GM12878 (cell line): ENCODE measurements at regions of chr2 and their contacts with region 1.

Region 1: DNA sequence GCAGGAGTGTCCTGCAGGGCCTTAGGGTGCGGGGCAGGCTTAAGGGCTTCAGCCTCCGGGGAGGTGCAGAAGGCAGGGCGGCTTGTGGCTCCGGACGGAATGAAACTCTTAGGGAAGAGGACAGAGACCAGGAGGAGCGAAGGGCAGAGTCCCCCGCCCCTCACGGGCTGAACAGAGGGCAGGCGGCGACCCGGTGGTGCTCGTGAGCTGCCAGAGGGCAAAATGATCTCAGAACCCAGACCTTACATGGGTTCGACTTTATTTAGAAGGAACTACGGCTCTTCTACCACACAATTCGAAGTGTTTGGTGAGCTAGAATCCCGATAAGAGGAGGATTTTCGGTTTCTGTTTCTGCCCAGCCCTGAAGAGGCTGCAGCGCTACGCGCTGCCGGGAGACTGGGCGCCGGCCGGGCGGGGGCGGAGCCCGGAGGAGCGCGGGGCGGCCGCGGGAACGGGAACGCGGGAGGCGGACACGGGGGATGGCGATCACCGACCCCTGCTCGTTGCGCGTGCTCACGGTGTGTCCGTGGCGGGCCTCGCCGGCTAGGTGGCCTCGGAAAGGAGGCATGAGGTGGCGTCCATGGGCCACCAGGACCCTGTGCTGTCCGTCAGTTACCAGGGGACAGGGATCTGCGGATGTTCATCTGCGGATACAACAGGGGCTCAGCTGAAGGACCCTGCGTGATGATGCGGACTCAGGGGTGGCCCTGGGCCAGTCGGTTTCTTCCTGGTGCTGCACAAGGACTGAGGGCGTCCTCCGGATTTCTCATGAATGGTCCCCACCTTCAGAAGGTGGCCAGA is 4.2 kb upstream of the SP100 start:
- DNase-seq: no peak
- ATAC-seq: peak; percentile 77
- H3K4me3 ChIP-seq: peak overlapping the region; percentile 77
- H3K27ac ChIP-seq: peak overlapping the region; percentile 79
- H3K4me1 ChIP-seq: peaks cover 35% of the 10 kb centered on the region
- H3K27me3 ChIP-seq: no peaks in the 10 kb centered on the region
- CTCF ChIP-seq: no peak
- EP300 ChIP-seq: no peak
- POLR2A ChIP-seq: peak; percentile 84
- RAD21 ChIP-seq: no peak

Region 2: GRCh38 chr2:230209422-230210051 is 202.2 kb before region 1 on chr2:
- CTCF ChIA-PET with region 1: no interaction called
- POLR2A ChIA-PET with region 1: interaction called, 4 read pairs
- RAD21 ChIA-PET with region 1: interaction called, 4 read pairs
- SMC1A ChIA-PET with region 1: interaction called, 11 read pairs
- in situ Hi-C with region 1: no loop called
- intact Hi-C with region 1: no loop called
- DNase-seq: no peak
- ATAC-seq: peak; percentile 76
- H3K4me3 ChIP-seq: no peak overlapping the region
- H3K27ac ChIP-seq: no peak overlapping the region
- H3K4me1 ChIP-seq: peaks cover 40% of the 10 kb centered on the region
- H3K27me3 ChIP-seq: no peaks in the 10 kb centered on the region
- CTCF ChIP-seq: no peak
- EP300 ChIP-seq: peak in 1 of 2 experiments; percentile 84; a peak in 2 of 4 replicates
- POLR2A ChIP-seq: no peak
- RAD21 ChIP-seq: no peak

Region 3: DNA sequence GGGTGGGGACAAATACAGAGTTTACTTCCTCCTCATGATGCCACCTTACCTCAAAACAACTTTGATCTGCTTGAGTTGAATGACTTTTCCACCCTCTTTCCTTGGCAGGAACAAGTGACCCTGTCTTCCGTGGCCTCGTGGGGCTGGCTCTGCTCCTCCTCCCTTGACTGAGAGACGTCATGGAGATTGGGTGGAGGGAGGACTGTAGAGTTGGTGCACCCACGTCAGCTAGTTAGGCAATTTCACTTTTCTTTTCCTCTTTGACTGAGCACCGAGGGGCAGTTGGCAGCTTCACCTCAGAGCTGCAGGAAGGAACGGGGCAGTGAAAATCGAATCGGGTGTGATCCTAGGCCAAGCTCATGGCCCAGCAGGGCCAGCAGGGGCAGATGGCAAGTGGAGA is 186.3 kb before region 1 on chr2 and contains the start of gene SP140:
- CTCF ChIA-PET with region 1: interaction called, 5 read pairs
- POLR2A ChIA-PET with region 1: interaction called, 6 read pairs
- RAD21 ChIA-PET with region 1: interaction called, 12 read pairs
- SMC1A ChIA-PET with region 1: interaction called, 5 read pairs
- in situ Hi-C with region 1: no loop called
- intact Hi-C with region 1: loop called (anchors 2 kb)
- DNase-seq: peak; percentile 80
- ATAC-seq: peak; percentile 77
- H3K4me3 ChIP-seq: peak within 1 kb of the TSS; percentile 72
- H3K27ac ChIP-seq: peak within 1 kb of the TSS; percentile 68
- H3K4me1 ChIP-seq: peaks cover 48% of the 10 kb centered on the region
- H3K27me3 ChIP-seq: no peaks in the 10 kb centered on the region
- CTCF ChIP-seq: 0 out of 6 replicates have a peak, but pooled peaks of 1 of the 3 experiments have one; percentile 4
- EP300 ChIP-seq: no peak
- POLR2A ChIP-seq: peak; percentile 93
- RAD21 ChIP-seq: no peak
- polyA plus RNA-seq, gene SP140: 61.7 to 93.9 TPM

Region 4: DNA sequence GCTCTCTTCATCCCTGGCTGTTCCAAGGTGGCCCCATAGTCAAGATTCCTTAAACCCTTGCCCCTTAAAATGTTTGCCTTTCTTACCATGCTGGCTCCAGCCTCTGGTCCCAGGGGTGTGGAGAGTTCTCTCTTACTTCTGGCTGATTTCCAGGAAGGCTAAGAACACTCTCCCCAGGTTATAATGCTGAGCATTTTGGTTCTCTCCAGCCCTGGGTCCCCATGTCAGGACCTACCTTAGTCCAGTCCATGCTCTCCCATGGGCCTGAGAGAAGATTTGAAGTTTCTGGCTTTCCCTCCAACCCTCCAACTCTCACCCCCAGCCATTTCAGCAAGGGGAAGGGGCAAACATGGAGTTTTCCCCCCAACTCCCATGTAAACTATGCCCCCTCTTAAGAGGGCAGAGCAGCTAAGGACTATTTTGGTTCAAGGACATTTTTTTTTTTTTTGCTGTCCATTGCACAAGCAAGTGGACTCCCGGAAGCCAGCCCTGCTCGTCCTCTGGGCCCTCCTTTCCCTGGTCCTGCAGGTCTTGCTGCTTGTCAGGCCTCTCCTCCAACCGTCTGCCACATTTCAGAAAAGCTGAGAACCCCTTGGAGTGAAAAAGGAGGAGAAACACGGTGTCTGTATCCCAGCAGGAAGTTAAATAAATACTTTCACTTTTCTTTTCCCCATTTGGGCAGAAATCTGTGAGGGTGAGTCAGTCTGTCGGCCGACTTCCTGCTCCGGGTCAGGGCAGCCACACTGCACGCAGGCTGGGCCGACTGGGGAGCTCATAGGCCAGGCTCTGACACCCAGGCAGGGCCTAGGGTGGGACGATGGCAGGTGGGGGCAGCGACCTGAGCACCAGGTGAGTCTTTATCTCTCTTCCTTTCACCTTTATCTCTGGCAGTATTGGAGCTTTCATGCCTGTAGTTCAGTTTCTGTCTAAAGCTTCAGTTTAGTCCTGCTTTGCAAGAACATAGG is 85.0 kb before region 1 on chr2 and contains the start of gene SP140L:
- CTCF ChIA-PET with region 1: interaction called, 4 read pairs
- POLR2A ChIA-PET with region 1: interaction called, 7 read pairs
- RAD21 ChIA-PET with region 1: interaction called, 14 read pairs
- SMC1A ChIA-PET with region 1: no interaction called
- in situ Hi-C with region 1: no loop called
- intact Hi-C with region 1: loop called (anchors 5 kb)
- DNase-seq: peak; percentile 55
- ATAC-seq: peak; percentile 96
- H3K4me3 ChIP-seq: peak within 1 kb of the TSS; percentile 78
- H3K27ac ChIP-seq: peak within 1 kb of the TSS; percentile 96
- H3K4me1 ChIP-seq: no peaks in the 10 kb centered on the region
- H3K27me3 ChIP-seq: no peaks in the 10 kb centered on the region
- CTCF ChIP-seq: no peak
- EP300 ChIP-seq: no peak
- POLR2A ChIP-seq: peak; percentile 81
- RAD21 ChIP-seq: no peak
- polyA plus RNA-seq, gene SP140L: 4.7 to 6.1 TPM

Region 5: GRCh38 chr2:230430957-230431910 is 19.5 kb after region 1 on chr2:
- CTCF ChIA-PET with region 1: no interaction called
- POLR2A ChIA-PET with region 1: no interaction called
- RAD21 ChIA-PET with region 1: interaction called, 10 read pairs
- SMC1A ChIA-PET with region 1: interaction called, 19 read pairs
- in situ Hi-C with region 1: no loop called
- intact Hi-C with region 1: no loop called
- DNase-seq: no peak
- ATAC-seq: peak; percentile 81
- H3K4me3 ChIP-seq: no peak overlapping the region; the same call in 1 of the 2 replicates
- H3K27ac ChIP-seq: peak overlapping the region; percentile 51
- H3K4me1 ChIP-seq: peaks cover 15% of the 10 kb centered on the region
- H3K27me3 ChIP-seq: no peaks in the 10 kb centered on the region
- CTCF ChIP-seq: no peak
- EP300 ChIP-seq: no peak
- POLR2A ChIP-seq: peak; percentile 51; the same call in 1 of the 2 replicates
- RAD21 ChIP-seq: no peak